CD14-positive monocyte (primary cell): ENCODE measurements at regions of chr17 and their contacts with region 1.

Region 1: GRCh38 chr17:29722411-29723198 is 99.9 kb upstream of the CORO6 start:
- DNase-seq: peak; percentile 89 to 94 (median 94)
- H3K4me3 ChIP-seq: peak overlapping the region in 2 of 3 experiments; percentile 30 to 48
- H3K4me3 Mint-ChIP-seq: peak overlapping the region; percentile 67 to 75
- H3K27ac ChIP-seq: peak overlapping the region; percentile 88 to 90
- H3K27ac Mint-ChIP-seq: peak overlapping the region; percentile 93 to 99 (median 98)
- H3K4me1 ChIP-seq: peaks cover 96 to 97% of the 10 kb centered on the region in 2 donors
- H3K4me1 Mint-ChIP-seq: peaks cover 91% of the 10 kb centered on the region
- H3K27me3 ChIP-seq: no peaks in the 10 kb centered on the region
- H3K27me3 Mint-ChIP-seq: no peaks in the 10 kb centered on the region
- CTCF ChIP-seq: no peak

Region 2: DNA sequence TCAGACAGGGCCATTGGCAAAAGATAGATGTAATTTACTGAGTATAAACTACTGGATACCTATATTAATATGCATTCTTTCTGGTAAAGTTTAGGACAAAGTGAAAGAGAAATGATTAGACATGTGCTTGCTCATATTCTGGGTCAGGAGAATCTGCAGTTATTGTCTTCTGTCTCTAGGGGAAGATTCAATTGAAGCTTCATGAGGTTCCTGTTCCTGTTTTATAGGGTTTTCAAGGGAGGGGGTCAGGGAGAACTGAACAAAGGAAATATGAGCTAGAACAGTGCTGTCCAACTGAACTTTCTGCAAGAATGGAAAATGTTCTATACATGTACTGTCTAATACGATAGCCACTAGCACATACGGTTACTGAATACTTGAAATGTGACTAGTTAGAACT is 40.6 kb before region 1 on chr17:
- intact Hi-C with region 1: loop called in 1 of 2 experiments (anchors 5 kb)
- DNase-seq: peak; percentile 65 to 77 (median 75)
- H3K4me3 ChIP-seq: peak overlapping the region in 2 of 3 experiments; percentile 16 to 67
- H3K4me3 Mint-ChIP-seq: peak overlapping the region; percentile 10 to 77
- H3K27ac ChIP-seq: peak overlapping the region; percentile 39 to 86
- H3K27ac Mint-ChIP-seq: peak overlapping the region; percentile 85 to 96 (median 91)
- H3K4me1 ChIP-seq: peaks cover 47 to 48% of the 10 kb centered on the region in 2 donors
- H3K4me1 Mint-ChIP-seq: peaks cover 46% of the 10 kb centered on the region
- H3K27me3 ChIP-seq: no peaks in the 10 kb centered on the region
- H3K27me3 Mint-ChIP-seq: no peaks in the 10 kb centered on the region
- CTCF ChIP-seq: peak; percentile 56

Region 3: DNA sequence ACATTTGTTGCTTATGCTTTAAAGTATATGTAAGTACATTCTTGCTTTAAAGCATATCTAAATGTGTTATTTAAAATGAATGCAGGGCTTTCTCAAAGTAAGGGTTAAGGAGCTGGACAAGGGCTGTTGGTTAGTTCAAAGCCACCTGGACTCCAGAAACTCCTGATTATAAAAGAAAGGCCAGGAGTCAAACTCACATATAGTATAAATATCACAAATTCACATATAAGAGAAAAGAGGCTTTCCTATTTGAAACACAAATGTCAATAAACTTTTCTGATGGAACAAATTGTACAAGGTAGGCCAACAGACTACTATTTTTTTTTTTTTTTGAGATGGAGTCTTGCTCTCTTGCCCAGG is 15.4 kb before region 1 on chr17:
- intact Hi-C with region 1: loop called in 1 of 2 experiments (anchors 2 kb)
- DNase-seq: no peak
- H3K4me3 ChIP-seq: peak overlapping the region in 1 of 3 experiments; percentile 64
- H3K4me3 Mint-ChIP-seq: peak overlapping the region in 1 of 2 donors; percentile 71
- H3K27ac ChIP-seq: peak overlapping the region; percentile 95 to 98
- H3K27ac Mint-ChIP-seq: peak overlapping the region; percentile 99 to 100 (median 100)
- H3K4me1 ChIP-seq: peaks cover 77 to 87% of the 10 kb centered on the region in 2 donors
- H3K4me1 Mint-ChIP-seq: peaks cover 77% of the 10 kb centered on the region
- H3K27me3 ChIP-seq: no peaks in the 10 kb centered on the region
- H3K27me3 Mint-ChIP-seq: no peaks in the 10 kb centered on the region
- CTCF ChIP-seq: no peak

Region 4: DNA sequence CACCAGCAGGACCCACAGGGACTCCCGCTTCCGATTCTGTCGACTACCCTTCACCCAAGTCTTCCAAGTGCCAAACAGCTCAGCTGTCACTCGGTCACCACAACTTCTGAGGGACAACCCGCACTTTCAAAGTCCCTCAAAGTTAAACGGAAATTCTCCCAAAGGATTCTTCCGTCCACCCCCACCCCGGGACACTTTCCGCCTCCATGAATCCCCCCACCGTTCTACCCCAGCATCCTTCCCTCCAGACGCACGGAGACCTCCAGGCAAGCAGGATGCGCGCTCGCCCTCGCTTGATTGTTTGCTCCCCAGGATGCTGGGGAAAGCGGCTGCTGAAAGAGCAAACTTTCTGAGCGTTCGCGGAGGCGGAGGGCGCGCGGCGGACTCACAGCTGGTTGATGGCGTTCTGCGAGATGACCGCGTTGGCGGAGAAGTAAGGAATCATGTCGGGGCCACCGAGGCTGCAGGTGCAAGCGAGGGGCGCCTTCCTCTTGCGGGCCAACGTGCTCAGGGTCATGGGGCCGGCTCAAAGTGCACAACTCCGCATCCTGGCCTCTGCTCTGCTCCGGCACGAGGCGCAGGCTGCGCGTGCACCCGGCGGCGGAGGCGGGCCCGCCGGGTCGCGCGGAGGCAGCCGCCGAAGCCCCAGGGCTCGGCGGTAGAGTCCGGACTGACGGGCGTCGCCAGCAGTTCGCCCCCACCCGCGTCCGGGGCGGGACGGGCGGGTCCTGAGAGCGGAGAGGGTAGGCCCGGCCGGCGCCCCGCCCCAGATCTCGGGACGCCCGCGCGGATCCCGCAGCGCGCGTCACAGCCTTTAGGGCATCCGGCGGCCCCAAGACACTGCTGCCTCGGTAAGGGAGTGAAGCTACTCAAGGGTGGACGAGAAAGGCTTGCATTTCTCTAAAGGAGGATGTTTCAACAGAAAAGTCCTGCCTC is 38.4 kb after region 1 on chr17:
- intact Hi-C with region 1: loop called in 1 of 2 experiments (anchors 5 kb)
- DNase-seq: peak; percentile 85 to 91 (median 87)
- H3K4me3 ChIP-seq: peak overlapping the region; percentile 78 to 100 (median 98)
- H3K4me3 Mint-ChIP-seq: peak overlapping the region; percentile 99
- H3K27ac ChIP-seq: peak overlapping the region; percentile 84 to 90
- H3K27ac Mint-ChIP-seq: peak overlapping the region; percentile 93 to 97 (median 95)
- H3K4me1 ChIP-seq: peaks cover 27 to 40% of the 10 kb centered on the region in 2 donors
- H3K4me1 Mint-ChIP-seq: peaks cover 28% of the 10 kb centered on the region
- H3K27me3 ChIP-seq: no peaks in the 10 kb centered on the region
- H3K27me3 Mint-ChIP-seq: peaks cover 0 to 1% (median 0%) of the 10 kb centered on the region in 3 donors
- CTCF ChIP-seq: no peak

Region 5: GRCh38 chr17:29782917-29783316 is 60.3 kb after region 1 on chr17:
- intact Hi-C with region 1: no loop called
- DNase-seq: no peak
- H3K4me3 ChIP-seq: no peak overlapping the region
- H3K4me3 Mint-ChIP-seq: no peak overlapping the region
- H3K27ac ChIP-seq: no peak overlapping the region
- H3K27ac Mint-ChIP-seq: no peak overlapping the region
- H3K4me1 ChIP-seq: peaks cover 5 to 7% of the 10 kb centered on the region in 2 donors
- H3K4me1 Mint-ChIP-seq: peaks cover 13% of the 10 kb centered on the region
- H3K27me3 ChIP-seq: no peaks in the 10 kb centered on the region
- H3K27me3 Mint-ChIP-seq: peaks cover 0 to 3% (median 0%) of the 10 kb centered on the region in 3 donors
- CTCF ChIP-seq: no peak

Region 6: DNA sequence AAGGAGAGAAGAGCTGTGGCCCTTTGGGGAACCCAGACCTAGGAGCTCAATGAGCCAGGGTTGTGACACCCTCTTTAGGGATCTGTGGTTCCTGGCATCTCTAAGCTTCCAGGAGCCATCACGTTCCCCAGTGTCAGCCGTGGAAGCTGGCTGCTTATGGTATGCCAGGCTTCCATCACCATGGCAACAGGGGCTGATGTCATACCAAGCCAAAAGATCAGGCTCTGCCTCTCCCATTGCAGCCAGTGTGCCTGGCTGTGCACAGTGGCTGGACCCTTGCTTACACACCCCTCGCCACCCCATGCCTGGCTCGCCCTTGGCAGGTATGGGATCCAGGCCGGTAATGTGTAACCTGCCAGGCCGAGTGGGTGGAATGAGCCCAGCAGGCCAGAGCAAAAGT is 116.4 kb after region 1 on chr17:
- intact Hi-C with region 1: no loop called
- DNase-seq: peak in 1 of 3 donors; percentile 23
- H3K4me3 ChIP-seq: no peak overlapping the region
- H3K4me3 Mint-ChIP-seq: no peak overlapping the region
- H3K27ac ChIP-seq: no peak overlapping the region
- H3K27ac Mint-ChIP-seq: peak overlapping the region in 1 of 7 donors; percentile 71
- H3K4me1 ChIP-seq: peaks cover 25 to 28% of the 10 kb centered on the region in 2 donors
- H3K4me1 Mint-ChIP-seq: peaks cover 31% of the 10 kb centered on the region
- H3K27me3 ChIP-seq: no peaks in the 10 kb centered on the region
- H3K27me3 Mint-ChIP-seq: peaks cover 0 to 2% (median 0%) of the 10 kb centered on the region in 3 donors
- CTCF ChIP-seq: no peak